ENCODE measurements at regions of chr6 and their contacts with region 1.

Region 1: DNA sequence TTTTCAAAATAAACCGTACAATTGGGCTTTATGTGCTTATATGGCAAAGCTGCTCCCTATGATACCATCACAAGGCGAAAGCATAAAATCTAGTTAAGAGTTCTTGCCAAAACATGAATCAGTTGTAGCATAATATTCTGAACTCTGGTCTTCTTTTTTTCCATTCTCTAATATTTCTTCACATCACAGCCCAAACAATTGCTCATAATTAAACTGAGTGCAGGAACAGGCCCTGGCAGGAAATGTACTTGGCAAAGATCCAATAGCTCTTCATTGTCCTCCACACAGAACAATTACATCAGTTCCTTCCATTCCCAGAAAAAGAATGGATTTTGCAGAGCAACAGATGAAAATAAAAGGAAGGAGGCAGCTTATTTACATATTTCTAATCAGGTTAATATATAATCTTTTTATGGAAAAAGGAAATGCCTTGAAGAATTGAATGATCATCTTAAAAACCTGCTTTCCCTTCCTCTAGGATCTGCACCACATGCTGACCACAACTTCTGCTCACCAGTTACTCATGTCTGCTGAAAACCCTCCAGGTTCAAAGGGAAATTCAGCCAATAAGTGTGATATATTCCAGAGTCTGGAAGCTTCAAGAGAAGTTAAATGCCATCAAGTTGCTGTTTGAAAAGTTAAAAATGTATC is 123.3 kb upstream of the COL21A1 start:
- DNase-seq: peak; percentile 93
- H3K4me3 Mint-ChIP-seq: peak overlapping the region; percentile 61
- H3K27ac Mint-ChIP-seq: peak overlapping the region; percentile 94
- H3K4me1 Mint-ChIP-seq: peaks cover 34% of the 10 kb centered on the region
- H3K27me3 Mint-ChIP-seq: no peaks in the 10 kb centered on the region
- CTCF ChIP-seq: no peak

Region 2: DNA sequence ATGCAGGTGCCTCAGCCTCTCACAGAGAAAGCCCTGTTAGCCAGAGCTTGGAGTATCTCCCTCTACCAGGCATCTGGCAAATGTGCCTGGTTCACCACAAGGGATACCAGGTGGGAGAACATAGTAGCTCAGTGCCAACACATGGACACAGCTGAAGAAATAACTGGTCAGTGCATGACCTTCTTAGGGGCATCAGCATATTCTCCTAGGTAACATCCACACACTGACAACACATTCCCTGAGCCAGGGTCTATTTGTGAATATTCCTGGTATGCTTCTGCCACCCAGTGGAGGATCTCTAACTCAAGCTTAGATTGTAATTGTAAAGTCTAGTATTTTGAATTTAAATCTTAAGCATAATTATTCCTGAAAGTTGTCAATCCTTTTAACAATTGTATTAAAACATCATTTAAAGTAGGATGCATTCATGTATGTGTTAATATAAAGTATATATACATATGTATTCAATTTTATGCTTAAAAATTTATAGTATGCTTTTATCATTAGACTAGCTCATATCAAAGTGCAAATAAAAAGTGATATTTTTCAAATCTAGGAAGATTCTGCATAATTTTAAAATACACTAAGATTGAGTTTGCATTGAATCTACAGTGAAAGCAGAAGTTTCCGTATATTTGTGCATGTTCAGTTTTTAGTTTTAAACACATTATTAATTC is 78.0 kb before region 1 on chr6:
- CTCF ChIA-PET with region 1: no interaction called
- POLR2A ChIA-PET with region 1: no interaction called
- intact Hi-C with region 1: no loop called
- DNase-seq: peak; percentile 71
- H3K4me3 Mint-ChIP-seq: no peak overlapping the region
- H3K27ac Mint-ChIP-seq: no peak overlapping the region
- H3K4me1 Mint-ChIP-seq: peaks cover 6% of the 10 kb centered on the region
- H3K27me3 Mint-ChIP-seq: no peaks in the 10 kb centered on the region
- CTCF ChIP-seq: peak; percentile 61

Region 3: GRCh38 chr6:56437171-56437900 is 66.7 kb after region 1 on chr6:
- CTCF ChIA-PET with region 1: interaction called, 13 read pairs
- POLR2A ChIA-PET with region 1: interaction called, 39 read pairs
- intact Hi-C with region 1: loop called (anchors 5 kb)
- DNase-seq: peak; percentile 76
- H3K4me3 Mint-ChIP-seq: no peak overlapping the region
- H3K27ac Mint-ChIP-seq: peak overlapping the region; percentile 66
- H3K4me1 Mint-ChIP-seq: peaks cover 24% of the 10 kb centered on the region
- H3K27me3 Mint-ChIP-seq: no peaks in the 10 kb centered on the region
- CTCF ChIP-seq: no peak

Region 4: GRCh38 chr6:56451165-56451739 is 80.6 kb after region 1 on chr6:
- CTCF ChIA-PET with region 1: interaction called, 35 read pairs
- POLR2A ChIA-PET with region 1: interaction called, 39 read pairs
- intact Hi-C with region 1: no loop called
- DNase-seq: peak; percentile 36
- H3K4me3 Mint-ChIP-seq: no peak overlapping the region
- H3K27ac Mint-ChIP-seq: peak overlapping the region; percentile 19
- H3K4me1 Mint-ChIP-seq: peaks cover 8% of the 10 kb centered on the region
- H3K27me3 Mint-ChIP-seq: no peaks in the 10 kb centered on the region
- CTCF ChIP-seq: no peak

Region 5: DNA sequence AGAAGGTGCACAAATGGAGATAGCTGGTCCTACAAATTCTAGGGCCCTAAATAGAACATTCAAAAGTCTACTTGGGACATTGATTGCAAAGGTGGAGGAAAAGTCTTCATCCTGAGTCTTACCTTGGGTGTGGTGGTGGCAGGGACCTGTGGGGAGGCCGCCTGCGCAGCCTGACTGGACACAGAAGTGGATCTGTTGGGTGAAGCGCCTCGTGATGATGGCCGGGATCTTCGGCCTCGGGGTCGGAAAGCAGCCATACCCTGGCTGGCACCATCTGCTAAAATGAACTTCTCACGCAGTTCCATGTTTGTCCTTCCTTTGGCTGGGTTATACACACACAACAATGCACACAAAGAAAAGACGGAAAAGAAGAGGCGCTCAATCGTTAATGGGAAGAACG is 92.8 kb after region 1 on chr6:
- CTCF ChIA-PET with region 1: interaction called, 8 read pairs
- POLR2A ChIA-PET with region 1: interaction called, 3 read pairs
- intact Hi-C with region 1: loop called (anchors 5 kb)
- DNase-seq: no peak
- H3K4me3 Mint-ChIP-seq: no peak overlapping the region
- H3K27ac Mint-ChIP-seq: no peak overlapping the region
- H3K4me1 Mint-ChIP-seq: no peaks in the 10 kb centered on the region
- H3K27me3 Mint-ChIP-seq: no peaks in the 10 kb centered on the region
- CTCF ChIP-seq: no peak

Region 6: DNA sequence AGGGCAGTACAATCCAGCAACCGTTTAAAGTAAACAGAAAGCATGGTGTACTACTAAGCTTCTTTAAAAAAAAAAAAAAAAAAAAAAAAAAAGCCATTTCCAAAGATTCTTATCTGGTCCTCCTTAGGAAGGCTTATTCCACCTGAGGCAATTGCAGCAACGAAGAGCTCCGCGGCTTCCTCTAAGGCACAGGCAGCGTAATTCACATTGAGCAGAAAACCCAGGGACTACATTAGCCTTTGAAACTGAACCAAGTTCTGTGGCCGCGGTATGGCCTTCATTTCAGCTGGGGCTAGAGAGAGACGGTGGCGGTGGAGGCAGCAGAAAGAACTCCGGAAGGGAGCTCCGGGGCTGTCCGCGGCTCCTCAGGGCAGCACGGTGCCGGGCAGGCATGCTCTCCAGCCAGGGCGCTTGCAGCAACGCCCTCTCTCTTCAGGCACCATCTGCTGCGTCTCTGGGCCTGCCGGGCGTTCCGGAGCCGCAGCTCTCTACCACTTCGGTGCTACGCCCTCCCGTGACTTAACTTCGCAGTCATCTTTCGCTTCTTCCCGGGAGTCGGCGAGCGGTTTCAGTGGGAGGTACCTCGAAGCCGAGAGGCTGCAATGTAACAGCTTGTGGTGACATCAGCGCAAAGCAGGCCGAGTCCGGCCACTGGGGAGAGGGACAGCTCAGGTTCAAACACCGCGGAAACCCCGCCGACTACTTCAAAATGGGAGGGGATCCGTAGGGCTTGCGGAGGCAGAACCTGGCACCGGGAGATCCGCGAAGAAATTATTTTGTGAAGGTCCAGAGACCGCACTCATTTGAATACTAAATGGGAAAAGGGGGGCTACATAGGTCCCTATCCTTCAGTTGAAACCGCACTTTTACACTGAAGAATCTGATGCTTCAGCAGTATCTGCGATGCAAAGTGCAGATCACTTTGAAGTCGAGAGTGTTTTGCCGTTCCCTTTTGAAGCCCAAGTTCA is 172.0 kb after region 1 on chr6:
- CTCF ChIA-PET with region 1: interaction called, 16 read pairs
- POLR2A ChIA-PET with region 1: interaction called, 8 read pairs
- intact Hi-C with region 1: loop called (anchors 1 kb)
- DNase-seq: peak; percentile 98
- H3K4me3 Mint-ChIP-seq: no peak overlapping the region
- H3K27ac Mint-ChIP-seq: no peak overlapping the region
- H3K4me1 Mint-ChIP-seq: peaks cover 11% of the 10 kb centered on the region
- H3K27me3 Mint-ChIP-seq: no peaks in the 10 kb centered on the region
- CTCF ChIP-seq: no peak

Region 7: DNA sequence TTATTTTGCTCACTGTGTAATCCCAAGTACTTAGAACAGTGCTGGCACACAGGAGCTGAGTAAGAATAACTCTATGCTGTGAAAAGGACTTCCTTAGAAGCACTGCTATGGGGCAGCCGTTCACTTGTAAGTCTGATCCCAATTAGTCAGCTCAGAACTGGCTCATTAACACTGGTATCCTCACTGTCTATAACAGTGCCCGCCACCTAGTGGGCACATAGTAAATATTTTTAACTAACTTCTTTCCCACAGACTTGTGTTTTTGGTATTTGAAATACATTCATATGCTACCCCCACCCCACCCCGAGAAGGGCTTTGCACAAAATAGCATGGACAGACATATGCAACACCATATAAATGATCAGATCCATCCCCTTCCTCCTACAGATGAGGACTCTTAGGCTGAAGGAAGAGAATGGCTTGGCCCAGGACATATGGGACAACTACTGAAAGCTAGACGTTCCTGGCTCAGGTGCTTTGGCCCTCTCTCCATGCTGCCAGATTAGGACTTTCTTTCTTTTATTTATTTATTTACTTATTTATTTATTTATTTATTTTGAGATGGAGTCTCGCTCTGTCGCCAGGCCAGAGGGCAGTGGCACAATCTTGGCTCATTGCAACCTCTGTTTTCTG is 224.9 kb after region 1 on chr6:
- CTCF ChIA-PET with region 1: interaction called, 6 read pairs
- POLR2A ChIA-PET with region 1: no interaction called
- intact Hi-C with region 1: loop called (anchors 5 kb)
- DNase-seq: peak; percentile 64
- H3K4me3 Mint-ChIP-seq: no peak overlapping the region
- H3K27ac Mint-ChIP-seq: no peak overlapping the region
- H3K4me1 Mint-ChIP-seq: peaks cover 6% of the 10 kb centered on the region
- H3K27me3 Mint-ChIP-seq: no peaks in the 10 kb centered on the region
- CTCF ChIP-seq: peak; percentile 37

Region 8: GRCh38 chr6:56790414-56790813 is 419.7 kb after region 1 on chr6:
- CTCF ChIA-PET with region 1: no interaction called
- POLR2A ChIA-PET with region 1: no interaction called
- intact Hi-C with region 1: no loop called
- DNase-seq: no peak
- H3K4me3 Mint-ChIP-seq: no peak overlapping the region
- H3K27ac Mint-ChIP-seq: peak overlapping the region; percentile 86
- H3K4me1 Mint-ChIP-seq: peaks cover 27% of the 10 kb centered on the region
- H3K27me3 Mint-ChIP-seq: no peaks in the 10 kb centered on the region
- CTCF ChIP-seq: no peak

Measured in MCF 10A (cell line).